ENCODE measurements at regions of chr11 and their contacts with region 1.

Region 1: GRCh38 chr11:506238-506994 is 626 bp downstream of the RNH1 start:
- DNase-seq: peak; percentile 99 to 100
- ATAC-seq: peak; percentile 85 to 86 (median 86)
- H3K4me3 ChIP-seq: peak overlapping the region; percentile 92
- H3K27ac ChIP-seq: peak overlapping the region; percentile 100
- H3K4me1 ChIP-seq: peaks cover 30% of the 10 kb centered on the region
- H3K27me3 ChIP-seq: no peaks in the 10 kb centered on the region
- CTCF ChIP-seq: no peak

Region 2: DNA sequence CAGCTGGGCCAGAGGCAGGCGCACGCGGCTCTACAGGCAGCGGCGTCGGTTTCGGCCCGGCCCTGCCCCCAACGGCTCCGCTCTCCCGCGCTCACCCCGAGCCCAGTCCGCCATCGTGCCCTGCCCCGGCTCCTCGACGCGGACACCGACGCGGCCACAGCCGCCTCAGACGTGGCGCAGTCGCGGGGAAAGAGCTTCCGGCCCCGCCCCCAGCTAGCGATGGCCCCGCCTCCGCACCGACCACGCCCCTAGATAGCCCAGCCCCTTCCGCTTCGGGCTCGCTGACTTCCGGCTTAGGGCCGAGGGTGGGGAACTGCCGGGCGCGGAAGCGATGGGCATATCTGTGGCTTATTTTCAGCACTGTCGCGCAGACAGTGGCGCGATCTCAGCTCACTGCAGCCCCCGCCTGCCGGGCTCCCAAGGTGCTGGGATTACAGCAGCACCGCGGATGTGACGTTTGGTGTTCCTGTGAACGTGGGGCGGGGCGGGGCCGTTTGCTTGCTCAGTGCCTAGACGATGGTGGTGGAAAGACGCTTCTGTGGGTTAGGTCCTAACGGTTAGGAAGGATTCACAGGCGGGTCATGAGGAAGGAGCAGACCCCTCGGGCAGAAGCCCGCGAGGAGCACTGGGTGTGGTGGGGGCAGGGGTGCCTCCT is 299.1 kb before region 1 on chr11 and contains the starts of genes BET1L and RIC8A:
- intact Hi-C with region 1: loop called in 1 of 2 experiments (anchors 10 kb)
- DNase-seq: peak; percentile 93 to 99
- ATAC-seq: peak; percentile 91 to 93 (median 92)
- H3K4me3 ChIP-seq: peak within 1 kb of the TSS; percentile 97
- H3K27ac ChIP-seq: peak within 1 kb of the TSS; percentile 99
- H3K4me1 ChIP-seq: peaks cover 24% of the 10 kb centered on the region
- H3K27me3 ChIP-seq: no peaks in the 10 kb centered on the region
- CTCF ChIP-seq: no peak
- total RNA-seq, gene BET1L: 11.8 to 27.7 (median 20.2) TPM
- total RNA-seq, gene RIC8A: 34.4 to 54.8 (median 37.9) TPM

Region 3: GRCh38 chr11:236774-237767 is 269.3 kb before region 1 on chr11 and contains the start of gene PSMD13:
- intact Hi-C with region 1: loop called in 1 of 2 experiments (anchors 10 kb)
- DNase-seq: peak; percentile 88 to 94
- ATAC-seq: peak; percentile 91 to 95 (median 92)
- H3K4me3 ChIP-seq: peak within 1 kb of the TSS; percentile 86
- H3K27ac ChIP-seq: peak within 1 kb of the TSS; percentile 92
- H3K4me1 ChIP-seq: peaks cover 45% of the 10 kb centered on the region
- H3K27me3 ChIP-seq: no peaks in the 10 kb centered on the region
- CTCF ChIP-seq: no peak
- total RNA-seq, gene PSMD13: 108 to 190 (median 149) TPM

Region 4: GRCh38 chr11:469684-470560 is 36.5 kb before region 1 on chr11:
- intact Hi-C with region 1: loop called in 1 of 2 experiments (anchors 5 kb)
- DNase-seq: peak; percentile 47 to 52
- ATAC-seq: peak; percentile 54 to 76 (median 62)
- H3K4me3 ChIP-seq: peak overlapping the region; percentile 16
- H3K27ac ChIP-seq: peak overlapping the region; percentile 61
- H3K4me1 ChIP-seq: peaks cover 12% of the 10 kb centered on the region
- H3K27me3 ChIP-seq: no peaks in the 10 kb centered on the region
- CTCF ChIP-seq: no peak

Region 5: DNA sequence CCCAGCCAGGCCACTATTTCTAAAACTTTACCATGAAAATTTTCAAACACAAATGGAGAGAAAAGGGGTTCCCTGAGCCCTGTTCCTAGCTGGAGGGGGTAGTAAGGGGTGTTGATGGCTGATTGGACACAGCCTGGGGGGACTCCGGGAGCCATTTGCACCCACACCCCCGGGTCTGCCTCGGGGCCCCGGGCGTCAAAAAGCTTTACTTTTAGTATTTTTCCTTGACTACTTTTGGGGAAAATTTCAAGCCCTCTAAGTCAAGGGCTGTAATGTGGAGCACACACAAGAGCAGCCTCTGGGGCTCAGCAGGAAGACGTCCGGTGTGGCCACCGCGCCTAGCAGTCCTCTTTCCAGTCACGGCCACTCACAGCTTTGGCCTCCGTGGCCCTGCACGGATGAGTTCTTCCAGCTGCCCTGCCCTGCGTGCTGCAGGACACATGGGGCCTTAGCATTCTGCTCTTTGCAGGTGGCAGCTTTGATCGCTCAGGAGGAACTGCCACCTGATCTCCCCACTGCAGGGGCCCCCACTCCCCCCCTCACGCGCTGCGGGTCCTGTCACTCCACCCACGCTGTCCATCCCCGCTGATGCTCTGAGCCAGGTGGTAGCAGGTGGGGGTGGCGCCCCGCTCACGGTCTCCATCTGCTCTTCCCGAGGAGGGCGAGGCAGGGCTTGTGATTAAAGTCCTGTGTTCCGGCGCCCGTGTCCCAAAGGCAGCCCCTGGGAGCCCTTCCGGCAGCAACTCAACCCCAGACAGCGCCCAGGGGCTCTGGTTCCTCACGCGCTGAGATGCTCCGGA is 13.8 kb before region 1 on chr11:
- intact Hi-C with region 1: no loop called
- DNase-seq: peak in 1 of 2 donors; percentile 49
- ATAC-seq: no peak
- H3K4me3 ChIP-seq: no peak overlapping the region
- H3K27ac ChIP-seq: no peak overlapping the region
- H3K4me1 ChIP-seq: no peaks in the 10 kb centered on the region
- H3K27me3 ChIP-seq: no peaks in the 10 kb centered on the region
- CTCF ChIP-seq: no peak

Measured in psoas muscle (tissue), 8 donors.